Activated T-helper 1 cell treated with anti-CD3 and anti-CD28 coated beads, Interleukin-12 subunit alpha, Interleukin-12 subunit beta, Interleukin-2, Interleukin-4 antibody, amounts not matched to agents 30 ng/mL and 10 ng/mL and 1 ng/mL, durations not matched to agents 14 hours and 24 hours and 36 hours (primary cell): ENCODE measurements at regions of chr20 and their contacts with region 1.

Region 1: DNA sequence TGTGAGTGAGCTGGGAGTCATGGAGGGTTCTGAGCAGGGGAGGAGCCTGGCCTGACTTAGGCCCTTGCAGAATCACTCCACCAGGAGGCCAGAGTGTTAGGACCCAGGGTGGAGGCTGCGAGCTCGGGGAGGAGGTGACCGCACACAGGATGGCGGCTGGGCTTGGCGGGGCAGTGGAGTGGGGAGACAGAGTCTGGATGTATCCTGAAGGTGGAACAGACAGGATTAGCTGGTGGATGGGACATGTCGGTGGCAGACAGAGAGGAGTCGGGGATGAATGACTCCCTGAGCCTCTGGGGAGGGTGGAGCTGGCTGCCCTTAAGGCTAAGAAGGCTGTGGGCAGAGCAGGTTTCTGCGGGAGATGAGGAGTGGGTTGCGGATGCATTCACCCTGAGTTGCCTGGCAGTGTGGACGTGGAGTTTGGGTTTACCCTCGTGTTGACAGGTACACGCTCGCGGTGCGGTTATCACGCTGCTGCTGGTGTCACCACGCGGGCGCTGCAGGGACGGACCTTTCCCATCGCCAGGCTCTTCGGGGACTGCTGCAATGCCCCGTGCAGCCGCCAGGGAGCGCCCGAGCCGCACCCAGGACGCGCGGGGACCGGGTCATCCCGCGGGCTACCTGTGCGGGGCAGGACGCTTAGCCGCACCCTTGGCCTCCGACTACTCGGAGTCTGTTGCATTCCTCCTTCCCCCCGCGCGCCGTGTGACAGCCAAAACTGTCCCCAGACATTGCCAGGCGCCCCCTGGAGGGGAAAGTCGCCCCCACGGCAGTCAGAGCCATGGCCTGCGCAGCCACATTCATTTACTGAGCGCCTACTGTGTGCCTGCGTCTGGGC is 43.0 kb upstream of the PTGIS start:
- DNase-seq: peak; percentile 75
- H3K4me3 Mint-ChIP-seq: peak overlapping the region; percentile 73
- H3K27ac Mint-ChIP-seq: peak overlapping the region; percentile 56
- H3K4me1 Mint-ChIP-seq: peaks cover 32% of the 10 kb centered on the region
- H3K27me3 Mint-ChIP-seq: no peaks in the 10 kb centered on the region

Region 2: DNA sequence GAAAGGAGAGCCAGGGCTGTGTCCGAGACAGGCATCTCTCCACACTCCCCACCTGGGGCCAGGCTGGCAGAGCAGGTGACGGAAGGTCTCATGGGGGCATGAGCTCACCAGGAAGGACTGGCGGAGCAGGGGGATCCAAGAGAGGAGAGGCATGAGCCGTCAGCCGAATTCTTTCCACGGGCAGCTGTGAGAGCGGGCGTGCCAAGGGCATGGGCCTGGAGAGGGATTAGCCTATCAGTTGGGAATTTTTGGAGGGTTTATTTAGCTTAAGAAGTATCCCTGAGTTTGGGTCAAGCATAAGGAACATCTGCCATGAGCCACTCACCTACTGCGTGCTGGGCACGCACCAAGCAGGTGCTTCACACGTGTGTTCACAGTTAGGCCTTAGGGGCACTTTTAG is 272.9 kb before region 1 on chr20:
- intact Hi-C with region 1: loop called (anchors 1 kb)
- DNase-seq: no peak
- H3K4me3 Mint-ChIP-seq: no peak overlapping the region
- H3K27ac Mint-ChIP-seq: no peak overlapping the region
- H3K4me1 Mint-ChIP-seq: no peaks in the 10 kb centered on the region
- H3K27me3 Mint-ChIP-seq: peaks cover 12% of the 10 kb centered on the region

Region 3: GRCh38 chr20:49541733-49542513 is 69.0 kb before region 1 on chr20:
- intact Hi-C with region 1: loop called (anchors 1 kb)
- DNase-seq: peak; percentile 60
- H3K4me3 Mint-ChIP-seq: peak overlapping the region; percentile 19
- H3K27ac Mint-ChIP-seq: peak overlapping the region; percentile 97
- H3K4me1 Mint-ChIP-seq: peaks cover 26% of the 10 kb centered on the region
- H3K27me3 Mint-ChIP-seq: peaks cover 5% of the 10 kb centered on the region

Region 4: GRCh38 chr20:49594143-49594930 is 16.6 kb before region 1 on chr20:
- intact Hi-C with region 1: loop called (anchors 1 kb)
- DNase-seq: peak; percentile 76
- H3K4me3 Mint-ChIP-seq: peak overlapping the region; percentile 81
- H3K27ac Mint-ChIP-seq: peak overlapping the region; percentile 99
- H3K4me1 Mint-ChIP-seq: peaks cover 90% of the 10 kb centered on the region
- H3K27me3 Mint-ChIP-seq: no peaks in the 10 kb centered on the region

Region 5: GRCh38 chr20:49646131-49646927 is 35.4 kb after region 1 on chr20:
- intact Hi-C with region 1: no loop called
- DNase-seq: no peak
- H3K4me3 Mint-ChIP-seq: no peak overlapping the region
- H3K27ac Mint-ChIP-seq: no peak overlapping the region
- H3K4me1 Mint-ChIP-seq: peaks cover 18% of the 10 kb centered on the region
- H3K27me3 Mint-ChIP-seq: no peaks in the 10 kb centered on the region

Region 6: GRCh38 chr20:49797344-49797615 is 186.4 kb after region 1 on chr20:
- intact Hi-C with region 1: loop called (anchors 5 kb)
- DNase-seq: no peak
- H3K4me3 Mint-ChIP-seq: no peak overlapping the region
- H3K27ac Mint-ChIP-seq: no peak overlapping the region
- H3K4me1 Mint-ChIP-seq: peaks cover 47% of the 10 kb centered on the region
- H3K27me3 Mint-ChIP-seq: peaks cover 17% of the 10 kb centered on the region

Region 7: DNA sequence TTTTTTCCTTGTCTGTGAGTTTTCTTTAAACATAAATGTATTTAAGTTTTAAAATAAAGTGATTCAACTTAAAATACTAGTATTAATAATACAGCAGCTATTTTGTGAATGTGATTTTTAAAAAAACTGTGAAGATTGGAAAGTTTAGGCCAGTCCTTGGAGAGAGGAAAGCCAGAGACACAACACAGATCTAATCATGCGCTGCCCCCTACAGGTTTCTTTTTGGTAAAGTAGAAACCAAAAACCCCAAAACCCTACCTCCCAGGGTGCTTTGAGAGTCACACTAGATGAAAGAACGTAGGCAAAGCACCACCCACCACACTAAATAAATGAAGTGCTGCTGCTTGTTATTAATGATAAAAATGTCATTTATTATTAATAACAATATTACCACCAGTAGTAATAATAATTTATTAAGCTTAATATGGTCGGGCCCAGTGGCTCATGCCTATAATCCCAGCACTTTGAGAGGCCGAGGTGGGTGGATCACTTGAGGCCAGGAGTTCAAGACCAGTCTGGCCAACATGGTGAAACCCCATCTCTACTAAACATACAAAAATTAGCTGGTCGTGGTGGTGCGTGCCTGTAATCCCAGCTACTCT is 235.4 kb after region 1 on chr20:
- intact Hi-C with region 1: loop called (anchors 1 kb)
- DNase-seq: peak; percentile 42
- H3K4me3 Mint-ChIP-seq: no peak overlapping the region
- H3K27ac Mint-ChIP-seq: no peak overlapping the region
- H3K4me1 Mint-ChIP-seq: peaks cover 19% of the 10 kb centered on the region
- H3K27me3 Mint-ChIP-seq: no peaks in the 10 kb centered on the region

Region 8: DNA sequence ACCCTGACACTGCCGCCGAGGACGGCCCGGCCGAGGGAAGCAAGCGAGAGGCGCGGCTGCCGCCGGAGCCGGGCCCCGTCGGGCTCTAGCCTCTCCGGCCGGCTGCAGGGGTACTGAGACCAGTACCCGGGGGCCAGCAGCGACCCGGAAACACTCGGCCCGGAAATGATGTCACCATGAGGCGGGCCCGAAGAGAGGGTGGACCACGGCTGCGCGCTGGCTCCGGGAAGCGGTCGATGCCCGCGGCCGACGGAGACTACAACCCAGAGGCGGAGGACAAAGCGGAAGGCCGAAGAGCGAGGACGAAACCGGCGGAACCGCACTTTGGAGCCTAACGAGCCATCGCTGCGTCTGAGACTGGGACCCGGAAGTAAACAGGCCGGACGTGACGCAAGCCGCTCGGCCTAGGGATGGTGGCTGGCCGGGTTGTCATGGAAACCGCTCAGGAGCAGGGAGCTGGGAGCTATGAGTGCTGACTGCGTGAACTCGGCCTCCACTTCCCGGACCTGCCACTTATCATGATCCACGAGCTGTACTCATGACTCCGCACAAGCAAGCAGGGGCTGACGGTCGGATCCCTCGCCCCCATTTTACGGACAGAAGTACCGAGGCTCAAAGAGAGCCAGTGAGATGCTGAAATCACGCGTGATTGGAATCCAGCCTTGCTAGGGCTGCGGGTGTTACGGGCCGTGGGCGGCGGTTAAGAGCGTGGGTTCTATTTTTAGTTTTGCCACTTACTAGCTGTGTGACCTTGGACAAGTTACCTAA is 304.6 kb after region 1 on chr20 and contains the start of gene SPATA2:
- intact Hi-C with region 1: loop called (anchors 1 kb)
- DNase-seq: peak; percentile 86
- H3K4me3 Mint-ChIP-seq: peak within 1 kb of the TSS; percentile 95
- H3K27ac Mint-ChIP-seq: peak within 1 kb of the TSS; percentile 99
- H3K4me1 Mint-ChIP-seq: peaks cover 27% of the 10 kb centered on the region
- H3K27me3 Mint-ChIP-seq: peaks cover 1% of the 10 kb centered on the region
- total RNA-seq, gene SPATA2: 9.7 and 10.4 TPM in 2 replicates